Endothelial cell of umbilical vein (primary cell): ENCODE measurements at regions of chr19 and their contacts with region 1.

Region 1: GRCh38 chr19:14440049-14440448 is 6.9 kb downstream of the PKN1 start:
- DNase-seq: peak; percentile 33
- H3K4me3 ChIP-seq: no peak overlapping the region
- H3K27ac ChIP-seq: peak overlapping the region; percentile 29
- H3K4me1 ChIP-seq: peaks cover 32% of the 10 kb centered on the region
- H3K27me3 ChIP-seq: no peaks in the 10 kb centered on the region
- CTCF ChIP-seq: no peak
- POLR2A ChIP-seq: no peak

Region 2: GRCh38 chr19:14383661-14384555 is 56.1 kb before region 1 on chr19:
- CTCF ChIA-PET with region 1: no interaction called
- POLR2A ChIA-PET with region 1: no interaction called
- dilution Hi-C with region 1: no loop called
- intact Hi-C with region 1: no loop called
- DNase-seq: no peak
- H3K4me3 ChIP-seq: no peak overlapping the region
- H3K27ac ChIP-seq: no peak overlapping the region
- H3K4me1 ChIP-seq: peaks cover 15% of the 10 kb centered on the region
- H3K27me3 ChIP-seq: no peaks in the 10 kb centered on the region
- CTCF ChIP-seq: no peak
- POLR2A ChIP-seq: no peak

Region 3: GRCh38 chr19:14450168-14450874 is 10.3 kb after region 1 on chr19:
- CTCF ChIA-PET with region 1: no interaction called
- POLR2A ChIA-PET with region 1: no interaction called
- dilution Hi-C with region 1: no loop called
- intact Hi-C with region 1: loop called (anchors 1 kb)
- DNase-seq: peak; percentile 65
- H3K4me3 ChIP-seq: no peak overlapping the region
- H3K27ac ChIP-seq: no peak overlapping the region
- H3K4me1 ChIP-seq: no peaks in the 10 kb centered on the region
- H3K27me3 ChIP-seq: no peaks in the 10 kb centered on the region
- CTCF ChIP-seq: no peak
- POLR2A ChIP-seq: no peak

Region 4: DNA sequence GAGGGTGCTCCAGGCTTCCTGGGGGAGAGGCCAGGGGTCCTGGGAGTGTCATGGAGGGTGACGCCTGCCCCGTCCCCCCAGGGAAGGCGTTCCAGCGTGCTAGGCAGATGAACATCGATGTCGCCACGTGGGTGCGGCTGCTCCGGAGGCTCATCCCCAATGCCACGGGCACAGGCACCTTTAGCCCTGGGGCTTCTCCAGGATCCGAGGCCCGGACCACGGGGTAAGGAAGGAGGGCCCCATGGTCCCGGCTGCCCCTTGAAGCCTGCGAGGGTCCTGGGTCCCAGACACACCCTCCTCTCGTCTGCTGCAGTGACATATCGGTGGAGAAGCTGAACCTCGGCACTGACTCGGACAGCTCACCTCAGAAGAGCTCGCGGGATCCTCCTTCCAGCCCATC is 23.7 kb after region 1 on chr19:
- CTCF ChIA-PET with region 1: no interaction called
- POLR2A ChIA-PET with region 1: no interaction called
- dilution Hi-C with region 1: no loop called
- intact Hi-C with region 1: no loop called
- DNase-seq: no peak
- H3K4me3 ChIP-seq: no peak overlapping the region
- H3K27ac ChIP-seq: no peak overlapping the region
- H3K4me1 ChIP-seq: no peaks in the 10 kb centered on the region
- H3K27me3 ChIP-seq: no peaks in the 10 kb centered on the region
- CTCF ChIP-seq: no peak
- POLR2A ChIP-seq: no peak